ENCODE measurements at regions of chr12 and their contacts with region 1.

Region 1: GRCh38 chr12:50302686-50303085 is 19.4 kb upstream of the LIMA1 start:
- DNase-seq: no peak
- H3K4me3 ChIP-seq: no peak overlapping the region
- H3K4me3 Mint-ChIP-seq: no peak overlapping the region
- H3K27ac Mint-ChIP-seq: no peak overlapping the region
- H3K4me1 ChIP-seq: peaks cover 27% of the 10 kb centered on the region
- H3K4me1 Mint-ChIP-seq: peaks cover 10% of the 10 kb centered on the region
- H3K27me3 ChIP-seq: no peaks in the 10 kb centered on the region
- H3K27me3 Mint-ChIP-seq: no peaks in the 10 kb centered on the region
- CTCF ChIP-seq: no peak

Region 2: DNA sequence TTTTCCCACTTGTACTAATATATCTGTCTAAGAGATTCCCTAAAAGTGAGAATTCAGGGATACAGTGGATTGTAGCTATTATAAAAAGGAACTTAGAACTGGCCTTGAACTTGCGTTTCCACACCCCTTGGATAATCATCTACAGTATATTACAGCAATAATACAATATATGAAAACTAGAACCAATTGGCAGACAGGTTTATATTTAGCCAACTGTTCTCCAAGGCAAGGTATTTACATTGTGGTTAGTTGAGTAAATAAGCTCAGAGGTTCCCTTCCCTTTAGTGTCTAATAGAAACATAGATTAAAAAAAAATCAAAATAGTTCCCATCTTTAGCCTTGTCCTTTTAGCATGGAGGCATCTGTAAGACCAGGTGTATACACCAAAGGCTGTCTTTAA is 61.5 kb before region 1 on chr12:
- CTCF ChIA-PET with region 1: no interaction called
- POLR2A ChIA-PET with region 1: no interaction called
- intact Hi-C with region 1: loop called (anchors 2 kb)
- DNase-seq: no peak
- H3K4me3 ChIP-seq: no peak overlapping the region
- H3K4me3 Mint-ChIP-seq: no peak overlapping the region
- H3K27ac Mint-ChIP-seq: peak overlapping the region; percentile 42
- H3K4me1 ChIP-seq: peaks cover 35% of the 10 kb centered on the region
- H3K4me1 Mint-ChIP-seq: peaks cover 31% of the 10 kb centered on the region
- H3K27me3 ChIP-seq: no peaks in the 10 kb centered on the region
- H3K27me3 Mint-ChIP-seq: no peaks in the 10 kb centered on the region
- CTCF ChIP-seq: no peak

Region 3: GRCh38 chr12:50257686-50258551 is 44.8 kb before region 1 on chr12:
- CTCF ChIA-PET with region 1: no interaction called
- POLR2A ChIA-PET with region 1: no interaction called
- intact Hi-C with region 1: no loop called
- DNase-seq: no peak
- H3K4me3 ChIP-seq: no peak overlapping the region
- H3K4me3 Mint-ChIP-seq: no peak overlapping the region
- H3K27ac Mint-ChIP-seq: peak overlapping the region; percentile 19
- H3K4me1 ChIP-seq: peaks cover 47% of the 10 kb centered on the region
- H3K4me1 Mint-ChIP-seq: peaks cover 40% of the 10 kb centered on the region
- H3K27me3 ChIP-seq: no peaks in the 10 kb centered on the region
- H3K27me3 Mint-ChIP-seq: no peaks in the 10 kb centered on the region
- CTCF ChIP-seq: no peak